Sciatic nerve (tissue), 2 donors: ENCODE measurements at regions of chr2 and their contacts with region 1.

Region 1: GRCh38 chr2:27723372-27724144 is 48.0 kb upstream of the MRPL33 start:
- DNase-seq: peak; percentile 83
- ATAC-seq: peak; percentile 83

Region 2: DNA sequence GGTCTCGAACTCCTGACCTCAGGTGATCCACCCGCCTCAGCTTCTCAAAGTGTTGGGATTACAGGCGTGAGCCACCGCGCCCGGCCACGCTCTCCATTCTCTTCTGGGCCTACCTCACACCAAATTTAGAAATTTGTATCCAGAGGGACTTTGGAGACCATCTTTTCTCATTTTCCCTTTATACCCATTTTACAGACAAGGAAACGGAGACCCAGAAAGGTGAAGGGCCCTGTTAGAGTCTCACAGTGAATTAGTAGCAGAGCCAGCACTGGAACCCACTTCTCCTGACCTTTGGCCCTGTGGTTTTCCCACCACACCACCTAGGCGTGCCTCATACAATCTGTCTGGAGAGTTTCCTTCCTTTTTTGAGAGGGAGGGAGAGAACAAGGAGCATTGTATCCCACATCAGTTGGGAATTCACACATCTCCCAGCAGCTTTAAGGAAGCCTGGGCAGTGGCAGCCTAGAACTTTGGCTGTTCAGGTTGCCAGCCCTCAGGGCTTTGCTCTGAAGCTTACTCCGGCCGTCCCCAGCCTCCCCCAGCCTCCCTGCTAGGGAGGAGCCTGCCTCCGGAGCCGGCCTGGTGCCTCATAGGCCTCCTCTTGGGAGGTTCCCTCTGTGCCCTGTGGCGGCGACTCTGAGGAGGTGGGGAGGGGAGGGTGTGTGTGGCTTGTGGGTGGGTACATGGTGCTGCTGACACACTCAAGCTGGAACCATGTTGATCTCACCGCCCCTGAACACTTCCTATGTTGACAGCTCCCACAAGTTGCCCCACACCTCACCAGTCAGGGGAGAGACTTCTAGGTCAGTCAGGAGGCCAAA is 682.9 kb after region 1 on chr2:
- intact Hi-C with region 1: loop called (anchors 10 kb)
- DNase-seq: no peak
- ATAC-seq: peak; percentile 5